K562 (cell line): ENCODE measurements at regions of chr13 and their contacts with region 1.

Region 1: GRCh38 chr13:30408319-30409101 is 13.8 kb upstream of the UBE2L5 start:
- DNase-seq: peak; percentile 86 to 91 (median 89)
- ATAC-seq: peak; percentile 99
- H3K4me3 ChIP-seq: no peak overlapping the region
- H3K27ac ChIP-seq: no peak overlapping the region
- H3K4me1 ChIP-seq: peaks cover 4 to 11% of the 10 kb centered on the region in 2 experiments; a peak in 4 of 5 replicates
- H3K27me3 ChIP-seq: no peaks in the 10 kb centered on the region
- CTCF ChIP-seq: peak; percentile 47 to 70 (median 58)
- EP300 ChIP-seq: no peak
- POLR2A ChIP-seq: no peak
- RAD21 ChIP-seq: peak; percentile 13 to 29; a peak in 2 of 4 replicates

Region 2: GRCh38 chr13:30551189-30551588 is 142.7 kb after region 1 on chr13:
- CTCF ChIA-PET with region 1: no interaction called
- POLR2A ChIA-PET with region 1: no interaction called
- in situ Hi-C with region 1: no loop called
- intact Hi-C with region 1: loop called (anchors 5 kb)
- DNase-seq: peak in 2 of 4 experiments; percentile 14 to 29
- ATAC-seq: peak; percentile 85
- H3K4me3 ChIP-seq: no peak overlapping the region
- H3K27ac ChIP-seq: no peak overlapping the region
- H3K4me1 ChIP-seq: no peaks in the 10 kb centered on the region
- H3K27me3 ChIP-seq: peaks cover 4 to 6% of the 10 kb centered on the region in 2 experiments; a peak in 1 of 5 replicates
- CTCF ChIP-seq: peak; percentile 23 to 53 (median 48); a peak in 3 of 6 replicates
- EP300 ChIP-seq: no peak
- POLR2A ChIP-seq: no peak
- RAD21 ChIP-seq: peak; percentile 49 to 64